ENCODE measurements at regions of chr3 and their contacts with region 1.

Region 1: DNA sequence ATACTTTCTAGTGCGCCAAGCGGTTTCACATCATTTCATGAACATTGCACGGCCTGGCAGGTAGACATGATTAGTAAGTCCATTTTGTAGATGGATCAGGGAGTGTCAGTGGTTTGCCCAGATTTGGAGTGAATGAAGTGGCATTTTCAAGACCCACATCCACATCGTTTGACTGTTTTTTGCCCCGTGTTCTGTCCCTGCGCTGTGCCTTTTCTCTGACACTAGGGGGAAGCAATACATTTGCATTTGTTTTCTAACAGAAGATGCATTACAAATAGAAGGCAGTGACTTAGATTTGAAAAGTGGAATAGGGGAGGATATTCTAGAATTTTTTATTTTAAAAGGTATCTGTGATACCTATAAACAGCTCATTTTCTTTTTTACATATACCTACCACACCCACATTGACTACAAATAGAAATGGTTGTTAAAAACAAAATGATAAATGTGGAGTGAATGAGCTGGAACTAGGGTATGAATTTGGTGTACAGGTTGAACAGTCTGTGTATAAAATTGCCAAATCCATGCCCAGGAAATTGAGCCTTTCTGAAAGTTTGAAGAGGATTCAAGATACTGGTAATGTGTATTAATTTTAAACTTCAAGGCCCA is 98.0 kb downstream of the USP13 start:
- DNase-seq: peak; percentile 43
- H3K4me3 ChIP-seq: no peak overlapping the region
- H3K27ac ChIP-seq: no peak overlapping the region
- H3K4me1 ChIP-seq: no peaks in the 10 kb centered on the region
- H3K27me3 ChIP-seq: no peaks in the 10 kb centered on the region
- CTCF ChIP-seq: peak; percentile 54 to 62
- POLR2A ChIP-seq: no peak

Region 2: GRCh38 chr3:179421500-179421899 is 329.3 kb before region 1 on chr3:
- CTCF ChIA-PET with region 1: no interaction called
- POLR2A ChIA-PET with region 1: no interaction called
- dilution Hi-C with region 1: no loop called
- intact Hi-C with region 1: no loop called
- DNase-seq: peak; percentile 53
- H3K4me3 ChIP-seq: no peak overlapping the region
- H3K27ac ChIP-seq: no peak overlapping the region
- H3K4me1 ChIP-seq: no peaks in the 10 kb centered on the region
- H3K27me3 ChIP-seq: no peaks in the 10 kb centered on the region
- CTCF ChIP-seq: peak; percentile 27 to 36
- POLR2A ChIP-seq: no peak

Region 3: GRCh38 chr3:179660872-179661271 is 90.0 kb before region 1 on chr3:
- CTCF ChIA-PET with region 1: no interaction called
- POLR2A ChIA-PET with region 1: no interaction called
- dilution Hi-C with region 1: no loop called
- intact Hi-C with region 1: no loop called
- DNase-seq: no peak
- H3K4me3 ChIP-seq: no peak overlapping the region
- H3K27ac ChIP-seq: no peak overlapping the region
- H3K4me1 ChIP-seq: peaks cover 1% of the 10 kb centered on the region
- H3K27me3 ChIP-seq: no peaks in the 10 kb centered on the region
- CTCF ChIP-seq: no peak
- POLR2A ChIP-seq: no peak

Region 4: GRCh38 chr3:179739816-179740594 is 10.8 kb before region 1 on chr3:
- CTCF ChIA-PET with region 1: interaction called, 18 read pairs
- POLR2A ChIA-PET with region 1: no interaction called
- dilution Hi-C with region 1: no loop called
- intact Hi-C with region 1: no loop called
- DNase-seq: peak; percentile 32
- H3K4me3 ChIP-seq: no peak overlapping the region
- H3K27ac ChIP-seq: peak overlapping the region; percentile 9
- H3K4me1 ChIP-seq: peaks cover 8% of the 10 kb centered on the region
- H3K27me3 ChIP-seq: no peaks in the 10 kb centered on the region
- CTCF ChIP-seq: no peak
- POLR2A ChIP-seq: no peak

Region 5: GRCh38 chr3:179829401-179829800 is 78.6 kb after region 1 on chr3:
- CTCF ChIA-PET with region 1: no interaction called
- POLR2A ChIA-PET with region 1: no interaction called
- dilution Hi-C with region 1: no loop called
- intact Hi-C with region 1: no loop called
- DNase-seq: no peak
- H3K4me3 ChIP-seq: no peak overlapping the region
- H3K27ac ChIP-seq: no peak overlapping the region
- H3K4me1 ChIP-seq: no peaks in the 10 kb centered on the region
- H3K27me3 ChIP-seq: peaks cover 4 to 6% of the 10 kb centered on the region in 2 experiments
- CTCF ChIP-seq: no peak
- POLR2A ChIP-seq: no peak

Measured in endothelial cell of umbilical vein (primary cell).